ENCODE measurements at regions of chr10 and their contacts with region 1.

Region 1: GRCh38 chr10:64738462-64738861 is 1217.3 kb downstream of the REEP3 start:
- DNase-seq: no peak
- H3K4me3 ChIP-seq: no peak overlapping the region
- H3K27ac ChIP-seq: no peak overlapping the region
- H3K4me1 ChIP-seq: no peaks in the 10 kb centered on the region
- H3K27me3 ChIP-seq: no peaks in the 10 kb centered on the region
- CTCF ChIP-seq: no peak

Region 2: GRCh38 chr10:66180581-66181318 is 1442.3 kb after region 1 on chr10:
- CTCF ChIA-PET with region 1: no interaction called
- POLR2A ChIA-PET with region 1: no interaction called
- intact Hi-C with region 1: loop called (anchors 5 kb)
- DNase-seq: peak; percentile 69
- H3K4me3 ChIP-seq: no peak overlapping the region
- H3K27ac ChIP-seq: no peak overlapping the region
- H3K4me1 ChIP-seq: no peaks in the 10 kb centered on the region
- H3K27me3 ChIP-seq: no peaks in the 10 kb centered on the region
- CTCF ChIP-seq: peak; percentile 66

Measured in A673 (cell line).